GM12878 (cell line): ENCODE measurements at regions of chr1 and their contacts with region 1.

Region 1: DNA sequence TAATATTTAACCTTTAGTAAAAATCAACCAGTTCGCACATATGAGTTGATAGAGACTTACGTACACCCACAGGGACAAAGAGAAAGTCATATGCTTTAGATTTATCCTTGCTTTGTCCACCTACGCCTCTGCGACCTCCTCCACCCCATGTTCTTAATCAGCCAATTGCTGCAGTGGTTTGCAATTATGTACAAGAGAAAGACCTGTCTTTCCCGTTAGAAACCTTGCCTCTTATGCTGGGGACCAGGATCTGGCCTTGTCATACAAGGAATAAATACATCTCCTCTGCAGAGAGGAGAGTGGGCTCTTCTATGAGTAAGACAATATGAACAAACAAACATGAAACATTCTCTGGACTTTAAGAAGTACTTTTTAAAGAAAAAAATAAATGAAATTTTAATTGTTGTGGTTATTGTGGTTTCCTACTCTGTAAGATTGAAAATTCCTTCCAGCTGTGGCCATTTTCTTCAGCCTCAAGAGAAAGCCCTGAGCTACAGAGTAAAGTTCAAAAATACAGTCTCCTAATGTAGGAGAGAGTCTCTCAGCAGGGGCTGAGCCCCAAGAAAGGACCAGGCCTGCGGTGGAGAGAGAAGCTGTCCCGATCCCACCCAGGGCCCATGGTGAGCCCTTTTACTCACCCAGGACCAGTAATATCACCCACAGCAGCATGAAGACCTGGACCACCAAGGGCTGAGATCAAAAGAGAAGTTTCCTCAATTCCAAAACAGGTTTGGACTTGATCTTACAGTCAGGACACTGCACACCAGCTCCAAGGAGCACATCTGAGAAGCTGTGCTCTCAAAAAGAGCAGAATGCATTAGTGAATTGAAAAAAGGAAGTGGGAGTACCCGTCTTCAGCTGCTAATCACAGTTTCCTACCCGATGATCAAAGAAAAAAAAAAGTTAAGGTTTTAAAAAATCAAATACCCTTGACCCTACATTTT is at the start of gene FCRL5:
- DNase-seq: peak; percentile 33
- ATAC-seq: peak; percentile 90
- H3K4me3 ChIP-seq: peak within 1 kb of the TSS; percentile 62
- H3K27ac ChIP-seq: peak within 1 kb of the TSS; percentile 34
- H3K4me1 ChIP-seq: peaks cover 15% of the 10 kb centered on the region
- H3K27me3 ChIP-seq: no peaks in the 10 kb centered on the region; a peak in 1 of 4 replicates
- CTCF ChIP-seq: no peak
- EP300 ChIP-seq: peak in 1 of 2 experiments; percentile 75; a peak in 2 of 4 replicates
- POLR2A ChIP-seq: no peak
- RAD21 ChIP-seq: no peak
- polyA plus RNA-seq, gene FCRL5: 2.6 to 5.7 TPM

Region 2: DNA sequence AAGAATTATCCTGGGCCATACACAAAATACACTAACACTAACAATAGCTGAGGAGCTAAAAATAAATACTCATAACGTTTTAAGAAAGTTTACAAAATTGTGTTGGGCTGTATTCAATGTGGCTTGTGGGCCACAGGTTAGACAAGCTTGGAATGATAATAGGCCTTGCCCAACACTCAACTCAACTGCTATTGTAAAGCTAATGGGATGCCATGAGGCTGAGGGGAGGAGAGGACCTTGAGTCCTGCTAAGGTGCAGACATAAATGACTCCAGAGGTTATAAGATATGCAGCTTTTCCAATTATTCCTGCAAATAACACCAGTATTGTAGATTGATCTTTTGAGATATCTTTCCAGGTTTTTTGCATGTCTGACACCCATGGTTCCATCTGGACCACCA is 96.6 kb before region 1 on chr1:
- CTCF ChIA-PET with region 1: no interaction called
- POLR2A ChIA-PET with region 1: no interaction called
- RAD21 ChIA-PET with region 1: no interaction called
- SMC1A ChIA-PET with region 1: no interaction called
- in situ Hi-C with region 1: no loop called
- intact Hi-C with region 1: no loop called
- DNase-seq: no peak
- ATAC-seq: no peak
- H3K4me3 ChIP-seq: no peak overlapping the region
- H3K27ac ChIP-seq: no peak overlapping the region
- H3K4me1 ChIP-seq: no peaks in the 10 kb centered on the region
- H3K27me3 ChIP-seq: no peaks in the 10 kb centered on the region; a peak in 1 of 4 replicates
- CTCF ChIP-seq: no peak
- EP300 ChIP-seq: no peak
- POLR2A ChIP-seq: no peak
- RAD21 ChIP-seq: no peak

Region 3: DNA sequence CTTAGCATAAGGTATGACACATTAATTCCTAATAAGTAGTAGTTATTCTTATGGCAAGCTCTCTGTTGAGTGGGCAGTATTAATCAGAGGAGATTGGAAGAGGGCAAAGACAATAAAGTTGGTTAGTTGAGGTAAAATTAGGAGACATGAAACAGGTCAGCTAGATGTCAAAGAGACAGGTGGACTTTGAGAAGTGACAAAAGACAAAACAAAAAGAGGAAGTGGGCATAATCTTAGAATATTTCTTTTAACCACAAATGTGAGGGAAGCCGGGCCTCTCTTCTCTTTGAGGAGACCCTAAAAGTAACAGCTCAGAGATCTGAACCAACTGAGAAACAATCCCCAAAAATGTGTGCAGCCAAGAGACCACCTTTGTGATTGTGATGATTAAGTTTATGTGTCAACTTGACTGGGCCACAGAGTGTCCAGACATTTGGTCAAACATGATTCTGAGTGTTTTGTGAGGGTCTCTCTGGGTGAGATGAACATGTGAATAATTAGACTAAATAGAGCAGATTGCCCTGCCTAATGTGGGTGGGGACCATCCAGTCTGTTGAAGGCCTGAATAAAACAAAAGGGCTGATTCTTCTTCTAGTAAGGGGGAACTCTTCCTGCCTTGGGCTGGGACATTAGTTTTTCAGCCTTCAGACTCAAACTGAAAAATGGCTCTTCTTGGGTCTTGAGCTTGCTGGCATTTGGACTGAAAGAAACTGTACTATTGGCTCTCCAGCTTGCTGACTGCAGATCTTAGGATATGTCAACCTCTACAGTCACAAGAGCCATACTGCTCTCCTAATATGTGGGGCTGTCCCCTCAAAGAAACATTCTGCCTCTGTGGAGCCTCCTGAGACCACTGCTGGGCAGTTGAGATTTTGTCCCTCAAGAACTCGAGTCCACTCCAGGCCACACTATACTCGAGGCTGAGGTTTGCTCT is 39.7 kb before region 1 on chr1:
- CTCF ChIA-PET with region 1: interaction called, 11 read pairs
- POLR2A ChIA-PET with region 1: interaction called, 10 read pairs
- RAD21 ChIA-PET with region 1: interaction called, 22 read pairs
- SMC1A ChIA-PET with region 1: interaction called, 26 read pairs
- in situ Hi-C with region 1: no loop called
- intact Hi-C with region 1: no loop called
- DNase-seq: peak; percentile 68
- ATAC-seq: peak; percentile 74
- H3K4me3 ChIP-seq: no peak overlapping the region
- H3K27ac ChIP-seq: peak overlapping the region; percentile 88
- H3K4me1 ChIP-seq: peaks cover 50% of the 10 kb centered on the region
- H3K27me3 ChIP-seq: no peaks in the 10 kb centered on the region
- CTCF ChIP-seq: no peak
- EP300 ChIP-seq: peak; percentile 89 to 95
- POLR2A ChIP-seq: no peak
- RAD21 ChIP-seq: no peak

Region 4: GRCh38 chr1:157878059-157878458 is 326.1 kb after region 1 on chr1:
- CTCF ChIA-PET with region 1: no interaction called
- POLR2A ChIA-PET with region 1: no interaction called
- RAD21 ChIA-PET with region 1: no interaction called
- SMC1A ChIA-PET with region 1: no interaction called
- in situ Hi-C with region 1: no loop called
- intact Hi-C with region 1: no loop called
- DNase-seq: no peak
- ATAC-seq: peak; percentile 70
- H3K4me3 ChIP-seq: no peak overlapping the region
- H3K27ac ChIP-seq: no peak overlapping the region
- H3K4me1 ChIP-seq: no peaks in the 10 kb centered on the region
- H3K27me3 ChIP-seq: no peaks in the 10 kb centered on the region
- CTCF ChIP-seq: peak; percentile 34 to 47 (median 45); a peak in 4 of 6 replicates
- EP300 ChIP-seq: no peak
- POLR2A ChIP-seq: no peak
- RAD21 ChIP-seq: peak; percentile 69